Left ventricle myocardium inferior (tissue), 1 donor: ENCODE measurements at regions of chr15 and their contacts with region 1.

Region 1: DNA sequence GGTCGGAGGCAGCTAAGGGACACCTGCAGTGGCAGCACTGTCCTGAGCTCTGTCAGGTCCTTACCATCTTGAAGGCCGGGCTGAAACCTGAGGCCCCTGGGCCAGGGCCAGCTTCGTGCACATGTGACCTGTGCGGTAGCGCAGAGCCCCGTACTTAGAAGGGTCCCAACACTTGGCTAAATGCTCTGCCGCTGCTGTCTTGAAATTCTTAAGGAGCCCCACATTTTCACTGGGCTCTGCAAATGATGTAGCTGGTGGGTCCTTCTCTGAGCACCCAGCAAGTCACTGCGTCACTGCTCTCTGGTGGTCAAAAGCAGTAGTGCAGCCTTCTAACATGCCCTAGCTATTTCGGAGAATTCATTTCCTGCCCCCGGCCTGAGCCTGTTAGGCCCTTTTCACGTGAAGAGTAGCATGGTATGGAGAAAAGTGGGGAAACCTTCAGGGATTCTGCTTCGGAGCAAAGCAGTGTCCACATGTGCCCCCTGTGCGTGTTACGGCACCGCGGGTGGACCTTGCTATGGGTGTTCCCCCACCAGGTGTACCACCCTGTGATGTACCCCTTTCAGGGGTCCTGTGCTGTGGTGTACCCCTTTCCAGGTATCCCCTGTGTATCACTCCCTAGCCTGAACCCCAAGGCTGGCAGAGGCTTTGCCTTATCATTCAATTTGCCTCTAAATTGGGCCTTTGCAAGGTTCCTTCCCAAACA is 79.7 kb downstream of the TMEM266 start:
- DNase-seq: peak; percentile 49
- H3K4me3 ChIP-seq: peak overlapping the region; percentile 40
- H3K27ac ChIP-seq: no peak overlapping the region
- H3K4me1 ChIP-seq: peaks cover 15% of the 10 kb centered on the region
- H3K27me3 ChIP-seq: peaks cover 24% of the 10 kb centered on the region
- CTCF ChIP-seq: peak; percentile 92

Region 2: GRCh38 chr15:76057332-76058000 is 82.1 kb before region 1 on chr15:
- intact Hi-C with region 1: loop called (anchors 5 kb)
- DNase-seq: no peak
- H3K4me3 ChIP-seq: peak overlapping the region; percentile 5
- H3K27ac ChIP-seq: no peak overlapping the region
- H3K4me1 ChIP-seq: peaks cover 18% of the 10 kb centered on the region
- H3K27me3 ChIP-seq: peaks cover 87% of the 10 kb centered on the region
- CTCF ChIP-seq: peak; percentile 77